Kidney (tissue), 22 donors: ENCODE measurements at regions of chr2 and their contacts with region 1.

Region 1: DNA sequence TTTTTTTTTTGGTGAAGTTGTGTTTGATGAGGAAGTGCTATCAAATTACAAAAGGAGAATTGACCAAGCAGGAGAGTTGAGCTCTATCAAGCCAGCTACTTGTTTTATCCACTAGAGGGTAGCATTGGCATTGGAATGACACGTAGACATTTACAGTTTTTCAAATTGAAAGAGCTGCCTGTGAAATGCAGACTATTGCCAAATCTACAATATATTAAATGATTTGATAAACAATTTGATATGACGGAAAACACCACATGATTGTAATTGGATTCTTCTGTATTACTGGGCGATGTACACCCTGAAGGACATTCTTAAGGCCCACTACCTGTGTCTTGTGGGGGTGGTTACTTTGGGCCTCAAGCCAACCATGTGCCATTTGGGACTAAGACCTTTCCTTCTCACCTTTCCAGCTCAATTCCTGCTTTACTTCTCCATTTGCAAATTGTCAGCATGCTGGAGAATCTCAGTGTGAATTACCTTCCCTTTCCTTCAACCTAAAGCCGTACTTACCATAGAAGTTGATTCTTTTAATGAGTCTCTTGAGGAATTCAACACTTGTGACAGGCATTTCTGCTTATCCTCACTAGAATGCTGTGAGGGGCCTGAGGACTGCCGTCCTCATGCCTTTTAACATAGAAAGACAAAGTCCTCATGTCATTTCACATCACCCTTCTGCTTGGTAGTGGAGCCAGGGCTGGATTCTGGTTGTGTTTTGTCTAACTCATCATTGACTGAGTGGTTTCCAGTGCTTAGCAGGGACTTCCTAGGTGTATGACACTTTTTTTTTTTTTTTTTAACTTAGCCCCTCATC is 134.8 kb upstream of the THUMPD2 start:
- DNase-seq: peak in 2 of 5 donors; percentile 84 to 91
- H3K4me3 ChIP-seq: no peak overlapping the region
- H3K27ac ChIP-seq: no peak overlapping the region
- H3K4me1 ChIP-seq: peaks cover 0 to 3% (median 0%) of the 10 kb centered on the region in 3 donors
- H3K27me3 ChIP-seq: no peaks in the 10 kb centered on the region
- CTCF ChIP-seq: peak; percentile 76

Region 2: GRCh38 chr2:40554668-40555285 is 640.9 kb after region 1 on chr2:
- intact Hi-C with region 1: loop called (anchors 10 kb)
- DNase-seq: peak; percentile 27 to 63 (median 47)
- H3K4me3 ChIP-seq: no peak overlapping the region
- H3K27ac ChIP-seq: no peak overlapping the region
- H3K4me1 ChIP-seq: no peaks in the 10 kb centered on the region
- H3K27me3 ChIP-seq: no peaks in the 10 kb centered on the region
- CTCF ChIP-seq: peak; percentile 94